Sciatic nerve (tissue), 2 donors: ENCODE measurements at regions of chr6 and their contacts with region 1.

Region 1: DNA sequence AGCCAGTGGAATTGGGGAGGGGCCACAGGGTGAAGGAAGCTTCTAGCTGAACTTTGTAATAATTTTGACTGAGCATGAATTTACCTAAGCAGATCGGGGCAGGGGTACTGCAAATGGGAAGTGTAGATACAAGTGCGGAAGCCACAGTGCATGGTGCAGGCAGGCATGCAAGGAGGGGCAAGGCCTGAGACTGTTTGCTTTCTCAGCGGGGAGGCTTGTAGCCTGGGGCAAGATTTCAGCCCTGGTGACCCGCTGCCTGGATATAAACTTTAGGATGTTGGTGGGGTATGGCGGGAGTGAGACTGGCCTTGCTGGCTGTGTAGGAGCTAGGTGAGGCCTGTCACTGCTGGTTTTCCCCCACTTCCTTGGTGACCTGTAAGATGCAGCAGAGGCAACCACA is 266.4 kb upstream of the PREP start:
- DNase-seq: no peak
- ATAC-seq: no peak

Region 2: GRCh38 chr6:105591053-105591452 is 78.2 kb before region 1 on chr6:
- intact Hi-C with region 1: no loop called
- DNase-seq: no peak
- ATAC-seq: no peak

Region 3: DNA sequence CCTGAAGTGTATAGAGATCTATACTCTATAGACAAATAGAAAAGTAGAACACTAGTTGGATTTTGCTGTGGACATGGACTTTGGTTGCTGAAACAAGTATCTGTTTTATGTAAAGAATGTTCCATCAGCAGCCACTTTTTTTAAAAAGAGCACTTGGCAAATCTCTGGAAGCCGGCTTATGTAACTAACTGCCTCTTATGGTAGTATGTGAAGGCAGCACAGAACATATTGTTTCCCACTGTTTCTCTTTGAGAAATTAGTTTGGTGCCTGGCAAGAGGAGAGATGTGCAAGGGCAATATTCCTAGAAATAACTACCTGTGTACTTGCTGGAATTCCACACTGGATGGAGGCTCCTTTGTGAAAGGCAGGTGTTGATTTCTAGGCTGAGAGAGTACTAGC is 24.1 kb before region 1 on chr6:
- intact Hi-C with region 1: loop called (anchors 1 kb)
- DNase-seq: no peak
- ATAC-seq: no peak